ENCODE measurements at regions of chr16 and their contacts with region 1.

Region 1: DNA sequence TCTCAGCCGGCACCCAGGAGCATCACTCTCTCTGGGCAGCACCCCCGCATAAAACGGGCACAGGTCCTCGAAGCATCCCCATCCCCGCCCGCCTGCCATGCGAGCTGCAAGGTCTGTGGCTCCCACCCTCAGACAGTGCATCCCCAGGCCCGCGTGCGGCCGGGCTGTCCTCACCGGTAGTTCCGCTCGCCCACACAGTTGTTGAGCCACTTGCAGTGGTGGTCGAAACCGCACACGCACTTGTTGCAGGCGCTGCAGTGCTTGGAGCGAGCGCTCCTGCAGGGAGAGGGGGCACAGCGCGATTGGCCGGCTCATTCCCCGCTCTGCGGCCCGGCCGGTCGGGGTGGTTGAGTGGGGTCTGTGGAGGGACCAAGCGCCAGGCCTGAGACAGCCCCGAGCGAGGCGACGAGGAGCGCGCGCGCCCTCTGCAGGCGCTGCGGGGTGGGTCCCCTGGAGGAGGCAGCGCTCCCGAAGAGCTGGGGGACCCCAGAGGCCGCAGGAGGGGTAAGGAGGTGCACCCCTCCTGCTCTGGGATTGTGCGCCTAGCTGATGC is 6.0 kb upstream of the TPPP3 start:
- DNase-seq: peak; percentile 37 to 52
- ATAC-seq: peak; percentile 51 to 83
- H3K4me3 ChIP-seq: no peak overlapping the region
- H3K27ac ChIP-seq: no peak overlapping the region
- H3K4me1 ChIP-seq: peaks cover 15% of the 10 kb centered on the region
- CTCF ChIP-seq: peak; percentile 62
- EP300 ChIP-seq: no peak
- POLR2A ChIP-seq: no peak
- RAD21 ChIP-seq: peak; percentile 63 to 70

Region 2: GRCh38 chr16:66728117-66728787 is 671.0 kb before region 1 on chr16:
- CTCF ChIA-PET with region 1: no interaction called
- POLR2A ChIA-PET with region 1: no interaction called
- DNase-seq: peak; percentile 61 to 66
- ATAC-seq: peak; percentile 90 to 94
- H3K4me3 ChIP-seq: no peak overlapping the region
- H3K27ac ChIP-seq: no peak overlapping the region
- H3K4me1 ChIP-seq: no peaks in the 10 kb centered on the region
- CTCF ChIP-seq: peak; percentile 80
- EP300 ChIP-seq: no peak
- POLR2A ChIP-seq: no peak
- RAD21 ChIP-seq: peak; percentile 37 to 52; a peak in 3 of 5 replicates

Region 3: DNA sequence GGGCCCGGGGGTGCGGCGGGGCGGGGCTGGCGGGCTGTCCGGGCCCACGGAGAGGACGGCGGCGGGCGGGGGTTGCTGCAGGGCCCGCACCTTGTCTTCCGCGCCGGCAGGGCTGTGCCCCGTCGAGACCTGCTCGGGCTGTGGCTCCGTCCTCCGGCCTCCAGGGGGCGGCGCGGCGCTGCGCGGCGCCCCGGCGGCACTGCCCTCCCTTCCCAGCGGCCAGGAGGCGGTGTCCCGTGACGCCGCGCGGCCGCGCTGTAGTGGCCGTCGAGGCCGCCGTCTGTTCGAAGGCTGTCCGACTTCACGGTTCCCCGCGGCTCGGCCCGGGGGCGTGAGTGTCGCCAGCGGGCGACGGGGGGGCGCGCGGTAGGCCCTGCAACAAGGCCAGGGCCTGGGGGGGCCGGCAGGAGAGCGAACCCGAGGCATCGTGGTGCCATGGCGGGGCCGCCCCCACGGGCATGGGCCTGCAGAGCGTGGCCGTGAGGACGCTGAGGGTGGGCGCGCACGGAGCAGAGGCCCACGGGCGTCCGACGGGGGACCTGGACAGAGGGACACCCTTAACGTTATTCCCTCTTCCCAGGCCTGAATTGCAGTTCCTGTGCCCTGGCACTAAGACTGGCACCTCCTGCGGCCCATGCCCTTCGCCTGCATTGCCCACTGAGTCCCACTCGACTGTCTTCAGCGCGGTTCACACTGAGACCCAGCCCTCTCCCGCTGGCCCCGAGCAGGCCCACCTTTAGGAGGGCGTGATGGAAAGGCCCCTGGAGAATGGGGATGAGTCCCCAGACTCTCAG is 119.8 kb before region 1 on chr16 and contains the start of gene PLEKHG4:
- CTCF ChIA-PET with region 1: interaction called, 18 read pairs
- POLR2A ChIA-PET with region 1: no interaction called
- DNase-seq: peak; percentile 86 to 93
- ATAC-seq: peak; percentile 86 to 91
- H3K4me3 ChIP-seq: peak within 1 kb of the TSS; percentile 80
- H3K27ac ChIP-seq: peak within 1 kb of the TSS; percentile 96 to 98
- H3K4me1 ChIP-seq: peaks cover 35% of the 10 kb centered on the region
- CTCF ChIP-seq: peak; percentile 78
- EP300 ChIP-seq: no peak
- POLR2A ChIP-seq: peak; percentile 65
- RAD21 ChIP-seq: peak; percentile 33 to 60; a peak in 4 of 5 replicates
- polyA plus RNA-seq, gene PLEKHG4: 10.0 and 17.7 TPM in 2 replicates

Region 4: DNA sequence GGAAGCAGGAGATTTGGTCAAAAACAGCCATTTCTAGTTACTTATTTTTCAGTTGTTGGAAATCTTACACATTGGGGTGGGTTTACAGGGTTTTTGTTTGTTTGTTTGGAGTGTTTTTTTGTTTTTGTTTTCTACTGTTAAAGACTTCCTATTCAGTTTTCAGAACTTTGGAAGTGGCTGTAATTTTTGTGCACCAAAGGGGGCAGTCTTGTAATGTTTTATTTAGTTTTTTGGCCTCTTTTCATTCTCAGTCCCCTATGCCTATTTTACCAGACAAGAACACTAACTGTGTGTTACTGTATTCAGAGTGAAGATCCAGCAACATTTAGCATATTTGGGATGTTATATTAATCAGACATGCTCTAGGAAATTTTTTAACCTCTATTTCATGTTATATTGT is 26.6 kb before region 1 on chr16:
- CTCF ChIA-PET with region 1: interaction called, 10 read pairs
- POLR2A ChIA-PET with region 1: no interaction called
- DNase-seq: peak in 1 of 2 experiments; percentile 41
- ATAC-seq: peak in 1 of 2 experiments; percentile 61; a peak in 2 of 6 replicates
- H3K4me3 ChIP-seq: no peak overlapping the region
- H3K27ac ChIP-seq: no peak overlapping the region
- H3K4me1 ChIP-seq: peaks cover 4% of the 10 kb centered on the region; the same call in 1 of the 3 replicates
- CTCF ChIP-seq: peak; percentile 44
- EP300 ChIP-seq: no peak
- POLR2A ChIP-seq: no peak
- RAD21 ChIP-seq: peak; percentile 38 to 58; a peak in 4 of 5 replicates

Region 5: GRCh38 chr16:67384778-67385510 is 14.3 kb before region 1 on chr16:
- CTCF ChIA-PET with region 1: interaction called, 34 read pairs
- POLR2A ChIA-PET with region 1: interaction called, 3 read pairs
- DNase-seq: no peak
- ATAC-seq: no peak
- H3K4me3 ChIP-seq: no peak overlapping the region
- H3K27ac ChIP-seq: no peak overlapping the region
- H3K4me1 ChIP-seq: no peaks in the 10 kb centered on the region
- CTCF ChIP-seq: no peak
- EP300 ChIP-seq: no peak
- POLR2A ChIP-seq: no peak
- RAD21 ChIP-seq: no peak

Region 6: DNA sequence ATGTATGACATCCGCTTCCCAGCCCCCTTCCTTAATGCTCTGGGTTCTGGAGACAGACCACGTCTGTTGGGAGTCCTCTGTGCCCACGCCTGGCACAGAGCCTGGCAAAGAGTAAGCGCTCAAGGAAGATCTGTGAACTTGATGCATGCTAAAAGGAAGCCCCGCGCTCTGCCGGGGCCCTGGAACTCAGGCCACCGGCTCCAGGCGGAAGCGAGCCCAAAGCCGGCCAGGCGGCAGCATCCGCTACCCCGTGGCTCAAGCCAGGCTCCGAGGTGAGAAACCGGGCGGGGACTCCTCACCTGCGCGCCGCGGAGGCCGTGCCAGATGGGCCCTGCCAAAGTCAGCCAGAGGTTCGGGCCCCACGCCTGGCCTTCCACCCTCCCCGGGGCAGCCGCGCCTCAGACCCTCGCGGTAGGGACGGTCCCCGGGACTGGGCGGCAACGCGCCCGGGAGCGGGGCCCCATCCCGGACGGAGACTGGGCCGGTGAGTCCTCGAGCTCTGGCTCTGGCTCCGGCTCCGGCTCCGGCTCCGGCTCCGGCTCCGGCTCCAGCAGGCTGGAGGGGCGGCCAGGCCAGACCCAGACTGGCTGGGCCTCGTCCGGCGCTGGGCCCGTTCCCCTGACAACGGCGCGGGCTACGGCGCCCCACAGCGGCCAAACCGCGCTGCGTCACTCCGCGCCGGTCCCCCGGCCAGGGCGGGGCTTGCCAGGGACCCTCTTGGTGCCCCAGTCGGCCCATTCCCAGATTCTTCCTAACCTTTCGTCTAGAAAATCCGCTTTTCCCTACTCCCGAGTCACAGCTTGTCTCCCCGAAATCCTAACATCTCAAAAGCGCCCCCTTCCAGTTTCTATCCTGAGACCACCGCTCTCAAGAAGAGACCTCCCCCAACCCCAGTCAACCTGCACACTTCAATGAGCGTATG is 16.9 kb after region 1 on chr16 and contains the start of gene ZDHHC1:
- CTCF ChIA-PET with region 1: interaction called, 28 read pairs
- POLR2A ChIA-PET with region 1: no interaction called
- DNase-seq: peak; percentile 78 to 89
- ATAC-seq: peak; percentile 94 to 96
- H3K4me3 ChIP-seq: peak within 1 kb of the TSS; percentile 80
- H3K27ac ChIP-seq: peak within 1 kb of the TSS; percentile 91 to 96
- H3K4me1 ChIP-seq: peaks cover 9% of the 10 kb centered on the region; the same call in 2 of the 3 replicates
- CTCF ChIP-seq: peak; percentile 70
- EP300 ChIP-seq: no peak
- POLR2A ChIP-seq: peak; percentile 49; the same call in 1 of the 2 replicates
- RAD21 ChIP-seq: peak; percentile 49 to 69
- polyA plus RNA-seq, gene ZDHHC1: 3.5 and 3.8 TPM in 2 replicates